Ovary (tissue), 10 donors: ENCODE measurements at regions of chr5 and their contacts with region 1.

Region 1: GRCh38 chr5:181191529-181192394 is 13.2 kb downstream of the TRIM7 start:
- DNase-seq: peak; percentile 93 to 99 (median 97)
- H3K4me3 ChIP-seq: peak overlapping the region; percentile 79
- H3K27ac ChIP-seq: peak overlapping the region; percentile 75 to 91
- H3K4me1 ChIP-seq: peaks cover 8% of the 10 kb centered on the region
- H3K27me3 ChIP-seq: no peaks in the 10 kb centered on the region
- CTCF ChIP-seq: peak in 1 of 3 donors; percentile 17
- EP300 ChIP-seq: no peak
- POLR2A ChIP-seq: peak; percentile 84

Region 2: DNA sequence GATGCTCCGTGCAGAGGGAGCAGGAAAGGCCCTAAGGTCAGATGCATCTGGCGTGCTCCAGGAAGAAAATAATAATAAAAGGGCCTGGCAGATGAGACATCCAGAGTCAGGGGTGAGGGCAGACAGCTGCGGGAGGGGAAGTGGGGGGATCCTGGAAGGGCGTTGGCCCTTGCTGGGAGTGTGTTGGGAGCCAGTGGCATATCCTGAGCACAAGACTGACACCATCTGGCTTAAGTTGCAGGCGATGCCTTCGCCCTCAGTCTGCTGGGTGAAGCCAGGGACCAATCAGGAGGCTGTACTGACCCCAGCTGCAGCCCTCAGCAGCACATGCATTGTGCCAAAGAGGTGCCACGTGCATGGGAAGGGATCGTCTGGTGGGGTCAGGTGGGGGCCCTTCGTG is 40.6 kb before region 1 on chr5:
- intact Hi-C with region 1: no loop called
- DNase-seq: no peak
- H3K4me3 ChIP-seq: no peak overlapping the region
- H3K27ac ChIP-seq: no peak overlapping the region
- H3K4me1 ChIP-seq: no peaks in the 10 kb centered on the region
- H3K27me3 ChIP-seq: no peaks in the 10 kb centered on the region
- CTCF ChIP-seq: no peak
- EP300 ChIP-seq: no peak
- POLR2A ChIP-seq: no peak

Region 3: DNA sequence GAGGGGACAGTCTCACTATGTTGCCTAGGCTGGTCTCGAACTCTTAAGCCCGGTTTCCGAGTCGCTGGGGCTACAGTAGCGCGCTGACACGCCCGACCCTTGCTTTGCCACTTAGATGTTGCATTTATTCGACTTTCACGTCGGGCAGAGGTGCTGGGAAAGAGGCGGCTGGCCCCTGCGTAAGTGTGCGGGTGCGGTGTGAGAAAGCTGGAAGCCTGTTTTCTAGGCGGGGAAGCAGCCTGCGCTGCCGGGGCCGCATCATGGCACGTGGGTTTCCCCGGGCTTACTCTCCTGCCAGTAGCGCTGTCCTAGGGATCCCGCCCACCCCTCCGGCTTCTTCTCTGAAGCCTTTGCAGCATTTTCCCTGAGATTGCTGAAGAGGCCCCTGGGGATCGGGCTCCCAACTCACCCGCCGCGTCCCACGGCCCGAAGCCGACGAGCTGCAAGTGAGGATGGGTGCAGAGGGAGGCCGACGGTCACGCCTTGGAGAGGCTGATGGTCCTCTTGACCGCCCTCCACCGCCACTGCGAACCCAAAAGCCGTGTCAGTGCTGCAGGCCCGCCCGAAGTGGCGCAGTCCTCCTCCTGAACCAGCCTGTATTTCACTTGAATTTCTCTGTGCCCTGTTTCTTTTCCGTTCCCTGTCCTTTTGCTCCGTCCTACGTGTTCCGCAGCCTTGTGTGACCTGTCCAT is 25.5 kb after region 1 on chr5:
- intact Hi-C with region 1: loop called in 2 of 4 experiments (anchors 2 to 5 kb)
- DNase-seq: peak; percentile 53 to 70 (median 62)
- H3K4me3 ChIP-seq: peak overlapping the region; percentile 34
- H3K27ac ChIP-seq: peak overlapping the region; percentile 5 to 56
- H3K4me1 ChIP-seq: peaks cover 3% of the 10 kb centered on the region
- H3K27me3 ChIP-seq: no peaks in the 10 kb centered on the region
- CTCF ChIP-seq: no peak
- EP300 ChIP-seq: no peak
- POLR2A ChIP-seq: no peak

Region 4: DNA sequence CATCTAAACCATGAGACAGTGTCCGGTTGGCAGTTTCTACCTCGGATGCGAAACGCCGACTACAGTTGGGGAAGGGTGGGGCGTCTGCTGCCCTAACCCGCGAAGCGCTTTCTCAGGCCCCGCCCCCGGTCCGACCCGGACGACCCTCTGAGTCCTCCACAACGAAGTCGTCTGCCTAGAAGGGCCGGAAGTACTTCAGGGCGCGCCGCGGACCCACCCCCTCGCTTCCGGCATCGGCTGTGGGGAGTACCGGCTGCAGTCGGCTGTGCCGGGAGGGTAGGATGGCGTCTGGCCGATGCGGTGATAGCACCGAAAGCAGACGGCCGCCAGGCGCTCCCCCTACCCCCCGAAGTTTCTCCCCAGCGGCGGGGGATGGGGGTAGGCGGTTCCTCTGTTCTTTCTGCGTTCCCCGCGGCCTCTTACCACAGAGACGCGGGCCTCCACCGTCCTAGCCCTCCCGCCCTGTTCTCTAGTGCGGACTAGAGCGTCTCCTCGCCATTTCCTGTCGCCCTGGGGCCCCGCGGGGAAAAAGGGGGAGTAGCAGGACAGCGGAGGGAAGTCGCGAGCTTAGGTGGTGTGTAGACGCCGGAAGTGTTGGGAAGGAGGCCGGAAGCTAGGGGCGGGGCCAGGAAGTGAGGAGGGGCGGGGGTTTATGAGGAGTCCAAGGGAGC is 31.4 kb after region 1 on chr5 and contains the start of gene TRIM41:
- intact Hi-C with region 1: loop called in 1 of 4 experiments (anchors 5 kb)
- DNase-seq: peak; percentile 98 to 100 (median 99)
- H3K4me3 ChIP-seq: peak within 1 kb of the TSS; percentile 86
- H3K27ac ChIP-seq: peak within 1 kb of the TSS; percentile 77 to 97
- H3K4me1 ChIP-seq: peaks cover 6% of the 10 kb centered on the region
- H3K27me3 ChIP-seq: no peaks in the 10 kb centered on the region
- CTCF ChIP-seq: peak in 1 of 3 donors; percentile 7
- EP300 ChIP-seq: peak; percentile 51
- POLR2A ChIP-seq: peak; percentile 95
- total RNA-seq, gene TRIM41: 8.2 to 22.7 (median 17.6) TPM

Region 5: GRCh38 chr5:181243512-181244343 is 52.0 kb after region 1 on chr5 and contains the start of gene RACK1:
- intact Hi-C with region 1: loop called in 1 of 4 experiments (anchors 1 kb)
- DNase-seq: peak; percentile 83 to 89 (median 85)
- H3K4me3 ChIP-seq: peak within 1 kb of the TSS; percentile 77
- H3K27ac ChIP-seq: peak within 1 kb of the TSS; percentile 67 to 74
- H3K4me1 ChIP-seq: peaks cover 18% of the 10 kb centered on the region
- H3K27me3 ChIP-seq: no peaks in the 10 kb centered on the region
- CTCF ChIP-seq: peak in 1 of 3 donors; percentile 11
- EP300 ChIP-seq: no peak
- POLR2A ChIP-seq: peak; percentile 66
- total RNA-seq, gene RACK1: 2,570 to 4,531 (median 3,203) TPM

Region 6: DNA sequence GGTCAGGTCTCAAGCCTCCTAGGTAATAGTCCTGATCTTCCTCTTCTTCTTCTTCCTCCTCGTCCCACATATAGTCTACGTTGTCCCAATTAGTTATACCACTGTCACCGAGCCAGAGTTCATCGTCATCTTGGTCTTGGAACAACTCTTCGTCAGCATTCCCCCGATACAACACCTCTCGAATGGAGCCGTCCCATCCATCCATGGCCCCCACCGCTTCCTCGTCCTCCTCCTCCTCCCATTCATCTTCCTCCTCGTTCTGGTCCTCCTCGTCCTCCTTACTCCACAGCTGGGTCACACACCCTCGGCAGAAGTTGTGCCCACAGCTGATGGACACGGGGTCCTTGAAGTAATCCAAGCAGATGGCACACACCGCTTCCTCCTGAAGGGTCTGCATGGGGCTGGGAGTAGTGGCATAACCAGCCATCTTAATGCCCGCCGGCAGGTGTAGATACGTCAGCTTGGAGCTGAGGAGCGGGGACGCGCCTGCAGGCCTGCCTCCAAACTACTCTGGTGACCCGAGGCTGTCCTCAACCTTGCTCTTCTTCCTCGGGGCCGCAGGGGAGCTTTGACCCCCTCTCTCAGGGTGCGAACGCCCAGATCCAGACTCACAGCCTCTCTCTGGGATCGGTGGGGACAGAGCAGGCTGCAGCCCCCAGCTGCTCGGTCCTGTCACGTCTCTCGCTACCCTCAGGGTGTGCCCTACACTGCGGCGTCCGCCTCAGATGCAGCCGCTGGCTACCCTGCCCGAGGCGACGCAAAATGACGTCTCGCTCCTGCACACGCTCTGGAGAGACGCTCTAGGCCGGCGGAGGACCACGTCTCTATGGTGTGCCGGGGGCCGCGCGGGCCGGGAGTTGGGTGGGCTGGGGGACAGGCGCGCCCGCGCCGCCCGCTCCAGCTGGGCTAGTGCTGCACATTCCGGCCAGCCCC is 68.9 kb after region 1 on chr5 and contains the start of gene TRIM52:
- intact Hi-C with region 1: loop called in 1 of 4 experiments (anchors 5 kb)
- DNase-seq: peak; percentile 85 to 92 (median 88)
- H3K4me3 ChIP-seq: peak within 1 kb of the TSS; percentile 88
- H3K27ac ChIP-seq: peak within 1 kb of the TSS; percentile 94 to 97
- H3K4me1 ChIP-seq: peaks cover 16% of the 10 kb centered on the region
- H3K27me3 ChIP-seq: no peaks in the 10 kb centered on the region
- CTCF ChIP-seq: peak in 1 of 3 donors; percentile 12
- EP300 ChIP-seq: no peak
- POLR2A ChIP-seq: peak; percentile 86
- total RNA-seq, gene TRIM52: 13.0 to 18.8 (median 17.2) TPM